Endothelial cell of umbilical vein (primary cell): ENCODE measurements at regions of chr6 and their contacts with region 1.

Region 1: DNA sequence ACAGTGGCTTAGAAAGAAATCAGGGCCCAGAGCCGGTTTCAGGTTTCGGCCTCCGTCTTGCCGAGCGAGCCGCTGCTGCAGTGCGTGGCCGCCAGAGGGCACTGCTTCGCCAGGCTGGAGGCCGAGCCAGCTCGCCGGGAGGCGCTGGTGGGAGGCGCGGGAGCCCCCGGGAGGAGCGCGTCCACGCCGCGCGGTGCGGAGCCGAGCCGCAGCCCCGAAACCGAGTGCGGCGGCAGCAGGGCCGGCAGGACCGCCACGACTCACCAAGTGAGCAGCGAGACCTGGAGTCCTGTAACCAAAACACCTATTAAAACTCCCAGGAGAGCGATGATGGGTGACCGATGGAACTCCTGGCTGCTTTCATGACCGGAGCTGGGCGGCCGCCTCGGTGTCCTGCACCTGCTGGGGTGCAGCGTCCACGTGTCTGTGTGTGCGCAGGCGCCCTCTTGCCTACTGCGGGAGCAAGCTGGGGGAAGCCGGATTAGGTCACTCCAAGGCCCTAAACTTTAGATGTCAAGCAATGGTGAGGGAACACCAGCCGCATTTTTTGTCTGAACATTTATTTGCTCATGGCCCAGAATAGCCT is 186.9 kb upstream of the UST start:
- DNase-seq: peak; percentile 64
- H3K4me3 ChIP-seq: peak overlapping the region in 2 of 3 experiments; percentile 36 to 41
- H3K27ac ChIP-seq: no peak overlapping the region
- H3K4me1 ChIP-seq: no peaks in the 10 kb centered on the region
- H3K27me3 ChIP-seq: no peaks in the 10 kb centered on the region
- CTCF ChIP-seq: peak; percentile 96 to 99
- POLR2A ChIP-seq: no peak

Region 2: DNA sequence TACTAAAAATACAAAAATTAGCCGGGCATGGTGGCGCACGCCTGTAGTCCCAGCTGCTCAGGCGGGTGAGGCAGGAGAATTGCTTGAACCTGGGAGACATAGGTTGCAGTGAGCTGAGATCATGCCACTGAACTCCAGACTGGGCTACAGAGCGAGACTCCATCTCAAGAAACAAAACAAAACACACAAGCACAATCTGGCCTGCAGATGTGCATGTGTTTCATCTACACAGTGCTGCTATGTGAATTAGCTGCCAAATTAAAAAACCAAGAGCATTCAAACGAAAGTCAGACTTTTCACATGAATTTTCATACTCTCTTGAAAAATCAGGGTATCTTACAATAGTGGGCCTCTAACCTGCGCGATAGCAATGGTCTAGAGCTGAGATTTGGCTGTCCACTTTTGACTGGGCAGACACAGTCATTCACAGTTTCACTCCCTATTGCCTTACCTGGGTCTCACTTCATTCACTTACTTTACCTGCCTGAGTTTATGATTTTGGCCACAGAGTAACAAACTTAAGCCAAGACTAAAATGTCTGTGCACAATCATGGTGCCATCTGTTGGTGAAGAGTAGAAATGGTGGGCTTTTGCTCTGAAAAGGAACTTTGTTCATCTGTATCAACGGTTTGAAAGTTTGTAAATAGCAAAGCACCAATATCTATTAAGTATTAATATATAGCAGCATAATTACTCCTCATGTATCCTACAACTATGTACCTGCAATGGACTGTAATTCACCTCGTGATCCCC is 48.4 kb after region 1 on chr6:
- CTCF ChIA-PET with region 1: interaction called, 27 read pairs
- POLR2A ChIA-PET with region 1: no interaction called
- dilution Hi-C with region 1: no loop called
- intact Hi-C with region 1: loop called (anchors 1 kb)
- DNase-seq: peak; percentile 51
- H3K4me3 ChIP-seq: no peak overlapping the region
- H3K27ac ChIP-seq: no peak overlapping the region
- H3K4me1 ChIP-seq: no peaks in the 10 kb centered on the region
- H3K27me3 ChIP-seq: no peaks in the 10 kb centered on the region
- CTCF ChIP-seq: peak; percentile 40 to 59
- POLR2A ChIP-seq: no peak